Prostate gland (tissue), 2 donors: ENCODE measurements at regions of chr2 and their contacts with region 1.

Region 1: DNA sequence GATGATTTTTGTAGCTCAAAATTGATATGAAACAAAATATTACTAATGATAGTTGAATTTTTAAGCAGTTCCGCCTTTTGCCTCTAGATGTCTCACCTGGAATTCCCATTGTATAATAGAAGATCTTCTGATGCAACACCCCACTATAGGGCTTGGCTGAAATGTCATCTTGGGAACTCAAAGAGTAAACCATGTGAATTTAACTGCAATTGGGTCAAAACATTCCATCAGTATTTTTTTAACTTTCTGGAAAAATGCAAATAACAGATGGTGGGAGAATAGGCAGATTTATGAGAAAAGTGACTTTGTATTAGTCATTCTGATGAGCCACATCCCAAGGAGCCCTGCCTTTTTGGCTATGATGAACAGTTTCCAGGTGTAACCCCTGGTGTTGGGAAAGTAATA is 489.9 kb downstream of the NYAP2 start:
- DNase-seq: peak; percentile 13
- H3K4me3 ChIP-seq: no peak overlapping the region
- H3K27ac ChIP-seq: no peak overlapping the region
- H3K4me1 ChIP-seq: no peaks in the 10 kb centered on the region
- H3K27me3 ChIP-seq: no peaks in the 10 kb centered on the region
- CTCF ChIP-seq: peak in 3 of 4 experiments; percentile 56 to 86 (median 83)
- POLR2A ChIP-seq: no peak

Region 2: GRCh38 chr2:225670111-225670974 is 219.1 kb before region 1 on chr2:
- intact Hi-C with region 1: loop called (anchors 10 kb)
- DNase-seq: no peak
- H3K4me3 ChIP-seq: no peak overlapping the region
- H3K27ac ChIP-seq: no peak overlapping the region
- H3K4me1 ChIP-seq: no peaks in the 10 kb centered on the region
- H3K27me3 ChIP-seq: no peaks in the 10 kb centered on the region
- CTCF ChIP-seq: peak in 3 of 4 experiments; percentile 35 to 56 (median 36)
- POLR2A ChIP-seq: no peak

Region 3: GRCh38 chr2:226721541-226721940 is 832.1 kb after region 1 on chr2:
- intact Hi-C with region 1: loop called (anchors 10 kb)
- DNase-seq: no peak
- H3K4me3 ChIP-seq: no peak overlapping the region
- H3K27ac ChIP-seq: no peak overlapping the region
- H3K4me1 ChIP-seq: no peaks in the 10 kb centered on the region
- H3K27me3 ChIP-seq: no peaks in the 10 kb centered on the region
- CTCF ChIP-seq: no peak
- POLR2A ChIP-seq: no peak

Region 4: DNA sequence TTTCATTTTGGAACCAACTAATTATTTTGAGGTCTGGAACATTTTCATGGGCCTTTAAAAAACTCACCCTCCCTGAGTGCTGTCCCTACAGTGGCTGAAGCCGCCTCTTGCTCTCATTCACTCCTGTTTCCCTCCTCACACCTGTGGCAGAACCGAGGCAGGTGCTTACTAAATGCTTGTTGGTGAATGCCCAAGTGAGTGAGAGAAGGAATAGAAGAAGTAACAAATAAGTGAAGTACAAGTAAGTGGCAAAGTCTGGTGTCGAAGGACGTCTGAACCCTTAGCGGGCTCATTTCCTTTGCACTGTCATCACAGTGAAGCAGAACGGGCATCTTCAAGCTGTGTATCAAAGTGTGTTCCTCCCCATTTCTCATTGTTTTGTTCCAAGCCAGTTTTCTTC is 1081.6 kb after region 1 on chr2:
- intact Hi-C with region 1: no loop called
- DNase-seq: no peak
- H3K4me3 ChIP-seq: no peak overlapping the region
- H3K27ac ChIP-seq: no peak overlapping the region
- H3K4me1 ChIP-seq: no peaks in the 10 kb centered on the region
- H3K27me3 ChIP-seq: no peaks in the 10 kb centered on the region
- CTCF ChIP-seq: no peak
- POLR2A ChIP-seq: no peak

Region 5: DNA sequence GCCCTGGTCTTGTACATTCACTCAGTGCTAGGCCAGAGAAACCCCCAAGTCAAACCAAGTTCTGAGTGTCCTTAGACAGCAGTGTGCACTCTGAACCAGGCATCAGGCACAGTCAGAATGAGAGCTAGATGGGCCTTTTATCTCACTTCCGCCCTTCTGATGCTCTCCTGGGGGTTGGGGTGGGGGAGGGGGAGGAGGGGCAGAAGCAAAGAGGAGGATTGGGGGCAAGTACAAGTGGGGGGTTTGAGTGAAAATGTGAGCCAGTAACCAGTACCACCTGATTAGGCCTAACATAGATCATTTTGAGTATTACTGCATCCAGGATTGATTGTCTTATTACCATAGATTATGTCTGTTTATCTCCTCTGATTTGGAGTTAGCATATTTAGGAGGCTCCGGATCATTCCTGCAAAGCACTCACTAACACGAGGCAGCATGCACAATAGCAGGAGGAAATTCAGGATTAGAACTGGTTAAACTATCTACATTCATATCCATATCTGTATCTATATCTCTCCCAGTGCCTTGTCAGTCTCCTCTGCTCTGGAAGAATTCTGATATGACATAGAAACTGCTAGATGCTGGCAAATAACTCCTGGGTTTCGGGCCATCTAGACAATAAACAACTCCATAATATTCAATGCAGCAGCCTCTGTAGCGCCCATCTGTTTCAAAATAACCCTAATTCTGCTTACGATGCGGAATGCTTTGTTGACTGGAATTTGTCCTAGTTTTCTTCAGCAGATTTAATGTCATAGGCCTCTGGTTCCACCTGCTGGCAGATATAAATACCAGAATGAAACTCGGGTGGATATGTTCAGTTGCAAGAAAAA is 1095.5 kb after region 1 on chr2:
- intact Hi-C with region 1: loop called (anchors 2 kb)
- DNase-seq: peak; percentile 61
- H3K4me3 ChIP-seq: no peak overlapping the region
- H3K27ac ChIP-seq: no peak overlapping the region
- H3K4me1 ChIP-seq: no peaks in the 10 kb centered on the region
- H3K27me3 ChIP-seq: no peaks in the 10 kb centered on the region
- CTCF ChIP-seq: peak; percentile 57 to 79 (median 78)
- POLR2A ChIP-seq: no peak